Heart right ventricle (tissue), 16 donors: ENCODE measurements at regions of chr20 and their contacts with region 1.

Region 1: GRCh38 chr20:32031007-32031958 is 20.8 kb upstream of the HCK start:
- DNase-seq: peak; percentile 80 to 87
- ATAC-seq: peak; percentile 79 to 91 (median 88)
- H3K4me3 ChIP-seq: peak overlapping the region in 8 of 10 donors; percentile 6 to 44 (median 33)
- H3K27ac ChIP-seq: peak overlapping the region in 1 of 10 donors; percentile 41
- H3K4me1 ChIP-seq: peaks cover 3 to 50% (median 11%) of the 10 kb centered on the region in 9 donors
- H3K27me3 ChIP-seq: peaks cover 0 to 34% (median 15%) of the 10 kb centered on the region in 7 donors
- CTCF ChIP-seq: peak in 8 of 9 donors; percentile 84 to 98 (median 88)

Region 2: GRCh38 chr20:31822421-31823330 is 208.6 kb before region 1 on chr20:
- intact Hi-C with region 1: loop called in 8 of 10 experiments (anchors 1 to 10 kb)
- DNase-seq: peak; percentile 82
- ATAC-seq: peak; percentile 83 to 93 (median 88)
- H3K4me3 ChIP-seq: peak overlapping the region in 1 of 10 donors; percentile 6
- H3K27ac ChIP-seq: peak overlapping the region in 5 of 10 donors; percentile 8 to 65 (median 41)
- H3K4me1 ChIP-seq: peaks cover 0 to 18% (median 8%) of the 10 kb centered on the region in 9 donors
- H3K27me3 ChIP-seq: peaks cover 0 to 6% (median 0%) of the 10 kb centered on the region in 7 donors
- CTCF ChIP-seq: peak; percentile 96 to 100 (median 99)

Region 3: DNA sequence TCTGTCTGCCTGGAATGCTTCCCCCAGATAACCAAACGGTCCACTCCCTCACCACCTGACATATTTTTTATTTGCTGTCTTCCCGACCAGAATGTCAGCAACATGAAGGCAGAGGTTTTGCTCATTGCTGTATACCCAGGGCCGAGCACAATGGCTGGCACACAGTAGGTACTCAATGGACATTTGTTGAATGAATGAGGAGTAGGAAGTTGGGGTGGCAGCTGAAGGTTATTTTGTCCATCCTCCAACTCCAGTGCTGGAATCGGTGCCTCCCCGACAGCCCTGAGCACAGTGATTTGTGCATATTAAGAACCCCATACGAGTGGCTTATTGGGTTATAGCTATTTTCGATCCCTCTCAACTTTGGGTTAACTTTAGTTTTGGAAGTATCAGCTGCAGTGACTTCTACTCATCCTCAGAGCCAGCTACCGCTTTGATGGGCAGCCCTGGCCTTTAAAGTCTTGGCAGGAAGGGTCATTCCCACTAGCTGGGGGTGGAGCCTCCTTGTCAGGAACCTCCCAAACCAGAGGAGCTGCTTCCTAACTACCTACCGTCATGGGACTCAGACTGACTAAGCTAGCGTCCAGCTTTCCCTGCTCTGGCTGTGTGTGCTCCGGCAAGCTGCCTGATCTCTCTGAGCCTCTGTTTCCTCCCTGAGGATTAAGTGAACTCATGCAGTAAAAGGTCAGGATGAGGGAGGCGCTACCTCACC is 171.1 kb before region 1 on chr20:
- intact Hi-C with region 1: loop called in 3 of 10 experiments (anchors 5 to 10 kb)
- DNase-seq: no peak
- ATAC-seq: peak in 7 of 8 donors; percentile 31 to 71 (median 57)
- H3K4me3 ChIP-seq: peak overlapping the region in 6 of 10 donors; percentile 53 to 65 (median 60)
- H3K27ac ChIP-seq: no peak overlapping the region
- H3K4me1 ChIP-seq: peaks cover 9 to 22% (median 17%) of the 10 kb centered on the region in 9 donors
- H3K27me3 ChIP-seq: peaks cover 0 to 48% (median 17%) of the 10 kb centered on the region in 7 donors
- CTCF ChIP-seq: no peak

Region 4: GRCh38 chr20:31951530-31952453 is 79.5 kb before region 1 on chr20 and contains the start of gene PDRG1:
- intact Hi-C with region 1: loop called in 6 of 10 experiments (anchors 2 to 10 kb)
- DNase-seq: peak; percentile 94 to 97
- ATAC-seq: peak; percentile 97 to 99 (median 99)
- H3K4me3 ChIP-seq: peak within 1 kb of the TSS; percentile 67 to 98 (median 90)
- H3K27ac ChIP-seq: peak within 1 kb of the TSS in 9 of 10 donors; percentile 50 to 90 (median 86)
- H3K4me1 ChIP-seq: peaks cover 8 to 18% (median 15%) of the 10 kb centered on the region in 9 donors
- H3K27me3 ChIP-seq: peaks cover 0 to 11% (median 0%) of the 10 kb centered on the region in 7 donors
- CTCF ChIP-seq: peak; percentile 80 to 99 (median 96)
- total RNA-seq, gene PDRG1: 6.4 to 10.7 (median 7.5) TPM

Region 5: DNA sequence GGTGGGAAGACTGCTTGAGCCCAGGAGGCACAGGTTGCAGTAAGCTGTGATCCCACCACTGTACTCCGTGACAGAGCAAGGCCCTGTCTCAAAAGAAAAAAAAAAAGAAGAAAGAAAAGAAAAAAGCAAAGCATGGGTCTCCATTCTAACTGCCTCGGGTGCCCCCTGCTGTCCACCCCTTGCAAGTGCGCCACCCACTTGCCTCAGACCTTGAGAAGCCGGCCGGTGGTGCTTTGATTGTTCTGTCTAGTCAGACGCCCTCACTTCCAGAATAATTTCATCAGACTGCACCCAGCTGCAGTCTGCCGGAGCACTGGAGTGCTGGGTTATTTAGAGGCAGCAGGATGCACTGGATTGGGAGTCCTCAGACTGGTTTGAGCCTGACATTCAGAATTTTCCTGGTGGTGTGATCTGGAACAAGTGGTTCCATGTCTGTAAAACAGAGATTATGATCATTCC is 60.6 kb after region 1 on chr20:
- intact Hi-C with region 1: loop called in 1 of 10 experiments (anchors 10 kb)
- DNase-seq: peak; percentile 66 to 68
- ATAC-seq: peak in 6 of 8 donors; percentile 28 to 85 (median 76)
- H3K4me3 ChIP-seq: no peak overlapping the region
- H3K27ac ChIP-seq: no peak overlapping the region
- H3K4me1 ChIP-seq: peaks cover 0 to 6% (median 0%) of the 10 kb centered on the region in 9 donors
- H3K27me3 ChIP-seq: peaks cover 0 to 10% (median 0%) of the 10 kb centered on the region in 7 donors
- CTCF ChIP-seq: peak; percentile 76 to 98 (median 92)